Activated T-helper 2 cell treated with anti-CD3 and anti-CD28 coated beads, Interferon-gamma antibody, Interleukin-2, Interleukin-4, amounts not matched to agents 10 μg/mL and 5 μg/mL and 100 μg/mL, durations not matched to agents 14 hours and 24 hours and 36 hours (primary cell): ENCODE measurements at regions of chr20 and their contacts with region 1.

Region 1: GRCh38 chr20:3010985-3011723 is 32.3 kb upstream of the GNRH2 start:
- DNase-seq: no peak
- H3K4me3 Mint-ChIP-seq: peak overlapping the region; percentile 1
- H3K27ac Mint-ChIP-seq: peak overlapping the region; percentile 94
- H3K4me1 Mint-ChIP-seq: peaks cover 57% of the 10 kb centered on the region
- H3K27me3 Mint-ChIP-seq: no peaks in the 10 kb centered on the region

Region 2: GRCh38 chr20:2523919-2524708 is 487.0 kb before region 1 on chr20:
- intact Hi-C with region 1: loop called (anchors 10 kb)
- DNase-seq: peak; percentile 85
- H3K4me3 Mint-ChIP-seq: peak overlapping the region; percentile 86
- H3K27ac Mint-ChIP-seq: peak overlapping the region; percentile 80
- H3K4me1 Mint-ChIP-seq: peaks cover 14% of the 10 kb centered on the region
- H3K27me3 Mint-ChIP-seq: no peaks in the 10 kb centered on the region

Region 3: DNA sequence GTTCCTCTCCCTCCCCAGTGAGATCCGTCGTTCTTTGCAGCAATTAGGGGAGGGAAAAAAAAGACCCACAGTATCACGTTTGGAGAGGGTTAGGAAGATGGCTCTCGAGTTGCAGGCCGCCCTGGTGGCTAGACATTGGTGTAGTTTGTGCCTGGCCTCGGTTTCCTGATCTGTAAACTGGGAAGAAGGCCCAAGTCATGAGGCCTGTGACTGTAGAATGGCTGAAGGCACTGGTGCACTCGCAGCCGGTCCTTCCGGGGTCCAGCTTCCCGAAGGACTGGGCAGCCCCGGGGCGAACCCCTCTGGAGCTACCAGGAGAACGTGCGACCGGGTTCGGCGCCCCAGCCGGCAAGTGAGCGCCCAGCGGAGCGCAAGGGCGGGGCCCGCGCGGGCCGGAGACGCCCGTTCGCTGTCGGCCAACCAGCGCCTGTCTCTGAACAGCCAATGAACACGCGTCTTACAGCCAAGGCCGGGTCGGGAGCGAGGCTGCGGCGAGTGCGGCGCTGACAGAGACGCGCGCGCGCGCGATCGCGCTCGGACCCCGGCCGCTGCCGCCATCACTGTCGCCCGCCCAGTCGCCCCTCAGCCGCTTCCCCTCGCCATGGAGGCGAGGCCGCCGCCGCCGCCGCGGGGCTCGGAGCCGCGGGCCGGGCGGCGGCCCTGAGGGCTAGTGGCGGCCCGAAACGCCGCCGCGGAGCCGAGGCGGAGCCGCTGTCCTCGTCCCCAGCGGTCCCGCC is 138.0 kb before region 1 on chr20 and contains the start of gene PTPRA:
- intact Hi-C with region 1: loop called (anchors 2 kb)
- DNase-seq: peak; percentile 90
- H3K4me3 Mint-ChIP-seq: peak within 1 kb of the TSS; percentile 88
- H3K27ac Mint-ChIP-seq: peak within 1 kb of the TSS; percentile 94
- H3K4me1 Mint-ChIP-seq: peaks cover 45% of the 10 kb centered on the region
- H3K27me3 Mint-ChIP-seq: no peaks in the 10 kb centered on the region
- total RNA-seq, gene PTPRA: 92.0 TPM in 2 replicates

Region 4: GRCh38 chr20:2955257-2955970 is 55.7 kb before region 1 on chr20:
- intact Hi-C with region 1: loop called (anchors 1 kb)
- DNase-seq: no peak
- H3K4me3 Mint-ChIP-seq: no peak overlapping the region
- H3K27ac Mint-ChIP-seq: peak overlapping the region; percentile 85
- H3K4me1 Mint-ChIP-seq: peaks cover 26% of the 10 kb centered on the region
- H3K27me3 Mint-ChIP-seq: no peaks in the 10 kb centered on the region

Region 5: GRCh38 chr20:2993250-2993649 is 17.9 kb before region 1 on chr20:
- intact Hi-C with region 1: loop called (anchors 1 kb)
- DNase-seq: no peak
- H3K4me3 Mint-ChIP-seq: no peak overlapping the region
- H3K27ac Mint-ChIP-seq: peak overlapping the region; percentile 81
- H3K4me1 Mint-ChIP-seq: peaks cover 38% of the 10 kb centered on the region
- H3K27me3 Mint-ChIP-seq: no peaks in the 10 kb centered on the region